K562 (cell line): ENCODE measurements at regions of chr1 and their contacts with region 1.

Region 1: GRCh38 chr1:40820251-40820797 is 36.7 kb downstream of the KCNQ4 start:
- DNase-seq: peak; percentile 73 to 82 (median 78)
- ATAC-seq: peak; percentile 80
- H3K4me3 ChIP-seq: no peak overlapping the region
- H3K27ac ChIP-seq: peak overlapping the region; percentile 71
- H3K4me1 ChIP-seq: peaks cover 30 to 78% of the 10 kb centered on the region in 2 experiments
- H3K27me3 ChIP-seq: no peaks in the 10 kb centered on the region
- CTCF ChIP-seq: peak; percentile 45 to 63 (median 58)
- EP300 ChIP-seq: no peak
- POLR2A ChIP-seq: no peak
- RAD21 ChIP-seq: peak in 1 of 2 experiments; percentile 45; a peak in 2 of 4 replicates

Region 2: GRCh38 chr1:40774266-40774998 is 45.9 kb before region 1 on chr1:
- CTCF ChIA-PET with region 1: interaction called, 3 read pairs
- POLR2A ChIA-PET with region 1: interaction called, 5 read pairs
- in situ Hi-C with region 1: no loop called
- intact Hi-C with region 1: loop called (anchors 1 kb)
- DNase-seq: peak; percentile 77 to 87 (median 82)
- ATAC-seq: peak; percentile 96
- H3K4me3 ChIP-seq: no peak overlapping the region
- H3K27ac ChIP-seq: peak overlapping the region; percentile 49
- H3K4me1 ChIP-seq: peaks cover 0 to 14% of the 10 kb centered on the region in 2 experiments; a peak in 4 of 5 replicates
- H3K27me3 ChIP-seq: no peaks in the 10 kb centered on the region
- CTCF ChIP-seq: peak; percentile 93 to 98 (median 94)
- EP300 ChIP-seq: peak; percentile 51; the same call in 1 of the 2 replicates
- POLR2A ChIP-seq: no peak
- RAD21 ChIP-seq: peak; percentile 90 to 94

Region 3: DNA sequence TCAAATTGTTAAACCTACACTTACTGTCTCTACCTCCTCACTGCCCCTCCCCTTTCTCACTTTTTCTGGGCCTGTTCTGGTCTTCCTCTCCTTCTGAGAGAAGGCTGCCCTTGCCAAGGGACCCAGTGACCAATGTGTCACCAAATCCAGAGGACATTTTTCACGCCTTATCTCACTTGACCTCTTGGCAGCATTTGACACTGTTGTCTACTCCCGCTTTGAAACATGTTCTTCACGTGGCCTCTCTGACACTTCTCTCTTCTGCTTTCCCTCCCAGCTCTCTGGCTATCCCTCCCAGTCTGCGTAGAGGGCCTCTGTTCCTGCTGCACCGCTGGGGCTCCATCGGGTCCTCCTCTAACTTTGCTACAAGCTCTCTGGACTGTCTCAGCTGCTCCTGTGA is 11.4 kb before region 1 on chr1:
- CTCF ChIA-PET with region 1: no interaction called
- POLR2A ChIA-PET with region 1: interaction called, 17 read pairs
- in situ Hi-C with region 1: no loop called
- intact Hi-C with region 1: no loop called
- DNase-seq: peak; percentile 50 to 66 (median 52)
- ATAC-seq: peak; percentile 66
- H3K4me3 ChIP-seq: no peak overlapping the region
- H3K27ac ChIP-seq: no peak overlapping the region; the same call in 2 of the 3 replicates
- H3K4me1 ChIP-seq: peaks cover 31 to 44% of the 10 kb centered on the region in 2 experiments
- H3K27me3 ChIP-seq: no peaks in the 10 kb centered on the region
- CTCF ChIP-seq: no peak
- EP300 ChIP-seq: no peak
- POLR2A ChIP-seq: no peak
- RAD21 ChIP-seq: no peak

Region 4: GRCh38 chr1:40831001-40831732 is 10.8 kb after region 1 on chr1:
- CTCF ChIA-PET with region 1: no interaction called
- POLR2A ChIA-PET with region 1: interaction called, 12 read pairs
- in situ Hi-C with region 1: no loop called
- intact Hi-C with region 1: no loop called
- DNase-seq: no peak
- ATAC-seq: no peak
- H3K4me3 ChIP-seq: no peak overlapping the region
- H3K27ac ChIP-seq: no peak overlapping the region
- H3K4me1 ChIP-seq: peaks cover 7 to 25% of the 10 kb centered on the region in 2 experiments; a peak in 4 of 5 replicates
- H3K27me3 ChIP-seq: no peaks in the 10 kb centered on the region
- CTCF ChIP-seq: no peak
- EP300 ChIP-seq: no peak
- POLR2A ChIP-seq: no peak
- RAD21 ChIP-seq: no peak